Lower lobe of right lung (tissue), 2 donors: ENCODE measurements at regions of chr3 and their contacts with region 1.

Region 1: DNA sequence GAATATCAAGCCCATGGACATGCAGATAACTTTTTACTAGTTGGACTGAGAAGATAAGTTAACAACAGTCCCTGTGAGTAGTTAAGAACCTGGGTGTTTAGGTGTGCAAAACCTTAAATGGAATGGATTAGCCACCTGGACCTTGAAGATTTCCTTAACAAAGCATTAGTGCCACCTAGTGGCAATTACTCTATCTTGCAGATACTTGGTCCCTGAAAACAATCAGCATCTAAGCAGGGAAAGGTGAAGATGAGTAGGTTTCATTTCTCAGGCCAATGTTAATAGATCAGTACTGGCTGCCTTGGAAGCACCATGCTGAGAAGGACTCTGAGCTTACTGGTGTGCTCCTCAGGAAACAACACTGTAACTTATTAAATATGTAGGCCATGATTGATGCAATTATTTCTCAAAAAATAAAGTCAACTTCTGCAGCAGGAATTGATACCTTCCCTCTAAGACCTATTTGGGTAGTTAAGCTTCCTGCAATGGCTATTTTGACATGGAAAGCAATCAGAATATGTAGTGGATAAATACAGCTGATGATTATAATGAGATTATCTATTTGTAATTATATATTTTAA is 329.4 kb downstream of the TBC1D5 start:
- DNase-seq: no peak
- ATAC-seq: peak; percentile 66 to 74
- H3K4me3 ChIP-seq: no peak overlapping the region
- H3K27ac ChIP-seq: no peak overlapping the region
- H3K4me1 ChIP-seq: no peaks in the 10 kb centered on the region
- H3K27me3 ChIP-seq: no peaks in the 10 kb centered on the region
- CTCF ChIP-seq: peak; percentile 79

Region 2: DNA sequence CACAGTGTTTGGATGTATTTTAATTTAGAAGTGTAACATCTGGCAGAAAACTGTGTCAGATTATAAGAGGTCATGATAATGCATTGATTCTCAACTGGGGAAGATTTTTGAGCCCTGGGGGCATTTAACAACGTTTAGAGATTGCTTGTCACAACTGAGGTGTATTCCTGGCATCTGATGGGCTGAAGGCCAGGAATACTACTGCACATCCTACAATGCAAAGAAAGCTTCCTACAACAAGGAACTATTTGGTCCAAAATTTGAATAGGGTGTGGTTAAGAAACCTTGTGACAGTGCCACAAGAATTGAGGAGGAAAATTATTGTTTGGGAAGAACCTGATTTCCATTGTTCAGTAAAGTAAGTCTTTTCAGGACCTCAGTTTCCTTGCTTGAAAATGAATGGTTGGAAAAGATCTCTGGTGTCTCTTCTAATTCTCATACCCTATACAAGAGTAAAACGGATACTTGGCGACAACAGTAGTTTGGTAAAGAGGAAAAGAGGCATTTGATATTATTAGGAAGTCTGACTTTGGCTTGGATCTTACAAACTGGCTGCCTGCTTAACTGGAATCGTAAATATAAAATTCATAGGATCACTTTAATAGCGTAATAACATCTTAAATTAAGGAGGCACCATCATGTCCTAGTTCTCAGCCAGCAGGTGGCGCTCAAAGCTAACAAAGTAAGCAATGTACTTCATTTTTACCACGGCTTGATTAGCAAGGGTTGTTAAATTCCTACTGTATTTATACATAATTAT is 812.1 kb before region 1 on chr3:
- intact Hi-C with region 1: loop called (anchors 5 kb)
- DNase-seq: peak; percentile 84
- ATAC-seq: peak; percentile 70 to 75
- H3K4me3 ChIP-seq: no peak overlapping the region
- H3K27ac ChIP-seq: no peak overlapping the region
- H3K4me1 ChIP-seq: peaks cover 3% of the 10 kb centered on the region
- H3K27me3 ChIP-seq: no peaks in the 10 kb centered on the region
- CTCF ChIP-seq: peak; percentile 83

Region 3: GRCh38 chr3:17258823-17259436 is 154.1 kb before region 1 on chr3:
- intact Hi-C with region 1: loop called (anchors 5 kb)
- DNase-seq: no peak
- ATAC-seq: no peak
- H3K4me3 ChIP-seq: no peak overlapping the region
- H3K27ac ChIP-seq: no peak overlapping the region
- H3K4me1 ChIP-seq: no peaks in the 10 kb centered on the region
- H3K27me3 ChIP-seq: no peaks in the 10 kb centered on the region
- CTCF ChIP-seq: peak; percentile 79